ENCODE measurements at regions of chr3 and their contacts with region 1.

Region 1: GRCh38 chr3:14178247-14179113 is at the starts of genes LSM3 and XPC:
- DNase-seq: peak; percentile 96 to 98
- H3K4me3 ChIP-seq: peak within 1 kb of the TSS; percentile 93
- H3K27ac ChIP-seq: peak within 1 kb of the TSS; percentile 99
- H3K4me1 ChIP-seq: peaks cover 0 to 40% (median 26%) of the 10 kb centered on the region in 4 donors
- H3K27me3 ChIP-seq: no peaks in the 10 kb centered on the region
- CTCF ChIP-seq: no peak

Region 2: DNA sequence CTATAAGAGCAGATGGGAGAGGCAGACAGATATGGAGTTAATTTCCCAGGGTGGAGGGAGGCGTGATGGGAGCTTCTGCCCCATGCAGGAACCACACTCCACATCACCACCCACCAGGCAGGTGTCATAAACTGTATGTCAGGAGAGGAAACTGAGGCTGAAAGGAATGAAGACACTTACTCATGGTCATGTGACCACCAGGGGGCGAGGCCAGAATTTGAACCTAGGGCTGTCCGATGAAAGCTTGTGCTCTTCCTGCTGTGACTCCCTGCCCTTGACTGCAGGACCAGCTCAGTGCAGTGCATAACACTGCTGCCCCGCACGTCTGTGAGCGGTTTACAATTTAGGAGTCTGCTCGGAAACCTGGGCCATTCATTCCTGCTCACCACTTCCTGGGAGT is 787.2 kb before region 1 on chr3:
- intact Hi-C with region 1: no loop called
- DNase-seq: no peak
- H3K4me3 ChIP-seq: no peak overlapping the region
- H3K27ac ChIP-seq: no peak overlapping the region
- H3K4me1 ChIP-seq: no peaks in the 10 kb centered on the region
- H3K27me3 ChIP-seq: no peaks in the 10 kb centered on the region
- CTCF ChIP-seq: no peak

Region 3: GRCh38 chr3:13976469-13976868 is 202.0 kb before region 1 on chr3:
- intact Hi-C with region 1: no loop called
- DNase-seq: no peak
- H3K4me3 ChIP-seq: no peak overlapping the region
- H3K27ac ChIP-seq: no peak overlapping the region
- H3K4me1 ChIP-seq: no peaks in the 10 kb centered on the region
- H3K27me3 ChIP-seq: no peaks in the 10 kb centered on the region
- CTCF ChIP-seq: no peak

Region 4: DNA sequence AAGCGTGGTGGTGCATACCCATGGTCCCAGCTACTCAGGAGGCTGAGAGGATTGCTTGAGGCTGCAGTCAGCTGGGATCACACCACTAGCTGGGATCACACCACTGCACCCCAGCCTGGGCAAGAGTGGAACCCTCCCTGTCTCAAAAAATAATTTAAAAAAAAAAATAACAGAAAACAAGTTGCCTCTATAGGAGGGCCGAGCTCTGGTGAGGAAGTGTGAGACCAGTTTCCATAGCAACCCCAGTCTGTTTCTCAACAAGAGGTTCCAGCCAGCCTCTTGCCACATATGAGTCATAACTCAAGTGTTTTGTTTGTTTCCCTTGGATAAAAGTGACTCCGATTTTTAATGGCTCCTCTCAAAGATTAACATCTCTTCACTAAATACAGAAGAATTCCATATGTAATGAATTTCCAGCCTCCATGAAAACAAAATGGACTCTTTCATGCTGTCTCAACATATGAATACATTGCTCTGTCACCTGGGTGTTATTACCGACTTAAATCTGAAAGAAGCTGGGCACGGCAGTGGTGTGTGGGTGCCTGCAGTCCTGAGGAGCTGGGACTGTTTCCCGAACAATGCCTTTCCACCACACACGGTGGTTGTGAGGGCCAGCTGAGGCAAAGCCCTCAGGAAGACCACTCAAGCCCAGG is 33.9 kb before region 1 on chr3:
- intact Hi-C with region 1: loop called (anchors 5 kb)
- DNase-seq: peak; percentile 88 to 89
- H3K4me3 ChIP-seq: peak overlapping the region; percentile 2 to 14
- H3K27ac ChIP-seq: peak overlapping the region; percentile 87 to 88
- H3K4me1 ChIP-seq: peaks cover 0 to 91% (median 70%) of the 10 kb centered on the region in 4 donors
- H3K27me3 ChIP-seq: no peaks in the 10 kb centered on the region
- CTCF ChIP-seq: no peak

Measured in tibial artery (tissue), 4 donors.